GM10248 (cell line): ENCODE measurements at regions of chr3 and their contacts with region 1.

Region 1: GRCh38 chr3:184513276-184514170 is 48.1 kb upstream of the EPHB3 start:
- DNase-seq: peak; percentile 92
- CTCF ChIP-seq: peak; percentile 75

Region 2: GRCh38 chr3:183895296-183895695 is 618.2 kb before region 1 on chr3:
- CTCF ChIA-PET with region 1: interaction called, 13 read pairs
- POLR2A ChIA-PET with region 1: no interaction called
- DNase-seq: peak; percentile 86
- CTCF ChIP-seq: peak; percentile 79

Region 3: GRCh38 chr3:184371570-184372018 is 141.9 kb before region 1 on chr3:
- CTCF ChIA-PET with region 1: interaction called, 61 read pairs
- POLR2A ChIA-PET with region 1: interaction called, 3 read pairs
- DNase-seq: peak; percentile 77
- CTCF ChIP-seq: peak; percentile 82

Region 4: DNA sequence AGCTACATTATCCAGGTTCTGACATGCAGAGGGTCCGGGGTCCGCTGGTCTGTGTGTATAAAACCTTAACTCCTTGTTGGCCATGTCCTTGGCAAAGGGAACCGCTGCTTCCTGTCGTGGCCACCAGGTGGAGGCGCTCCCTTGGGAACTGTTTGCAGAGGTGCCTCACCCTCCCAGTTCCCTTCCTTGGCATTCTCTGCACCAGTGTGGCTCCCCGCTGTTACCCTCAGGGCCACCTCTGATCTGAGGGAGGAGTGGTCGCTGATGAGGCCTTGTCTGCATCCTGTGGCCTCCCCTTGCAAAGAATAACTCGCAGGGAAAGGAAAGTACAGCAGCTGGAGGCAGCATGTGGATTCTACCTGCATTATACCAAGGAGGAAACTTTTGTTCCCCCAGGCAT is 44.1 kb before region 1 on chr3:
- CTCF ChIA-PET with region 1: interaction called, 11 read pairs
- POLR2A ChIA-PET with region 1: interaction called, 6 read pairs
- DNase-seq: no peak
- CTCF ChIP-seq: peak; percentile 42

Region 5: DNA sequence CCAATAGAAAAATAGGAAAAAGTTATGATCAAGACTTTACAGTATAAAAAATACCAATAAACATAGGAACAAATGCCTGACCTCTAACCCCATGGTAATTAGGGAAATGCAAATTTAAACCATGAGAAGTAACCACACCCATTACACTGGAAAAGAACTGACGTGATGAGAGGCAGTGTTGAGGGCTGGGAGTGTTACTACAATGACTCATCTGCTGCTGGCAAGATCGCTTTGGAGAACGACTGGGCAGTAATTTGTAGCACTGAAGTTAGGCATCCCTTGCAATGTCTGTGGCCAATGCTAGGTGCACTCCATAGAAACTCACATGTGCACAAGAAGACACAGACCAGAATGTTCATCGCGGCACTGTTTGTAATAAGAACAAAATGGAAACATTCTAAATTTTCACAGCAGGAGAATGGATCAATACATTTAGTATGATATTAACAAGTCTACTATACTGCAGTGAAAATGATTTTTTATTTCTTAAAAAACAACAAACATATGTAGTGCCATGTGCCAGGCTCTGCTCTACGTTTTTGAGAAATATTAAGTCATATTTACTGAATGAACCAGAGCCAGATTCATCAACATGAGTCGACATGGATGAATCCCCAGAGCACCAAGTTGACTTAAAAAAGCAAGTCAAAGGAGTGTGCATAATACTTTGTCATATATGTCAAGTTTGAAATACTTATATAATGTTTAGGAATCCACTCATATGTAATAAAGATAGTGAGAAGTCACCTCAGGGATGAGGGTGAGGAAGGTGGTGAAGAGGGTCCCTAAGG is 10.5 kb after region 1 on chr3:
- CTCF ChIA-PET with region 1: interaction called, 38 read pairs
- POLR2A ChIA-PET with region 1: no interaction called
- DNase-seq: no peak
- CTCF ChIP-seq: no peak